ENCODE measurements at regions of chrX and their contacts with region 1.

Region 1: GRCh38 chrX:40647307-40648197 is at the start of gene CXorf38:
- DNase-seq: peak; percentile 90
- H3K4me3 ChIP-seq: peak within 1 kb of the TSS; percentile 78 to 82 (median 81)
- H3K27ac ChIP-seq: peak within 1 kb of the TSS; percentile 64
- H3K4me1 ChIP-seq: peaks cover 21% of the 10 kb centered on the region
- H3K27me3 ChIP-seq: no peaks in the 10 kb centered on the region
- CTCF ChIP-seq: no peak
- POLR2A ChIP-seq: peak; percentile 83
- total RNA-seq, gene CXorf38: 12.1 and 12.4 TPM in 2 replicates

Region 2: GRCh38 chrX:39532761-39533160 is 1114.8 kb before region 1 on chrX:
- CTCF ChIA-PET with region 1: no interaction called
- POLR2A ChIA-PET with region 1: no interaction called
- dilution Hi-C with region 1: no loop called
- intact Hi-C with region 1: no loop called
- DNase-seq: no peak
- H3K4me3 ChIP-seq: no peak overlapping the region
- H3K27ac ChIP-seq: no peak overlapping the region
- H3K4me1 ChIP-seq: no peaks in the 10 kb centered on the region
- H3K27me3 ChIP-seq: peaks cover 0 to 1% of the 10 kb centered on the region in 2 experiments
- CTCF ChIP-seq: no peak
- POLR2A ChIP-seq: no peak

Region 3: DNA sequence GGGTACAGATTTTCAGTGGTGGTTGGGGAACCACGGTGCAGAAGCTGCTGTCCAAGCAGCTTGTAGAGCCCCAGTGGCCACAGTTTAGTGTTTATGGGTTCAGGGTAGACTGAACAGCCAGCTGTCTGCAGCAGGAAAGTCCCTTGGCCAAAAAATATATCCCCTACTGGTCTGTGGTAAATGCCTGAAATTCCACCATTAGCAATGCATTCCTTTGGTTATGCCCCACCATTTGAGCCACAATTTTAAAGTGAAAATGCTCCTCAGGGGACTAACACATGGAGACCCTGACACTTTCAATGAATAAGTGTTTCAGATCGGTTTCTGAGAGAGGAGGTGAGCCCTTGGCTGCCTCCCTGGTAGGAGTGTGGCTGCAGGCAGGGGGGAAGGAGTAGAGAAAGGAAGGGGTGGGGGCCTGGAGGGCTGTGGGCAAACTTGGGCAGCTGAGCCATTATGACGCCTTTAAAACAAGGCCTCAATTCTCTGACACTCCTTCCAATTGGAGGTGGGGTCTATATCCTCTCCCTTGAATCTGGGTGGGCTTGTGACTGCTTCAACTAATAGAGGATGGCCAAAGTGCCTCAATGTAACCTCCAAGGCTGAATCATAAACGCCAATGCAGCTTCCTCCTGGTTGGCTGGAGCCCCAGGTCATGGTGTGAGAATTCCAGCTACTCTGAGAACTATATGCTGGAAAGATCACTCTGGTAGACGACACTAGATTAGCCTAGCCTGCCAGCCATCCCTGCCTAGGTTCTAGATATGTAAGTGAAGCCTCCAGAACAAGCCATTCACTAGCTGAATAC is 142.5 kb before region 1 on chrX:
- CTCF ChIA-PET with region 1: no interaction called
- POLR2A ChIA-PET with region 1: no interaction called
- dilution Hi-C with region 1: no loop called
- intact Hi-C with region 1: no loop called
- DNase-seq: no peak
- H3K4me3 ChIP-seq: no peak overlapping the region
- H3K27ac ChIP-seq: no peak overlapping the region
- H3K4me1 ChIP-seq: no peaks in the 10 kb centered on the region
- H3K27me3 ChIP-seq: no peaks in the 10 kb centered on the region
- CTCF ChIP-seq: no peak
- POLR2A ChIP-seq: no peak

Region 4: GRCh38 chrX:40580537-40581335 is 66.8 kb before region 1 on chrX and contains the start of gene ATP6AP2:
- CTCF ChIA-PET with region 1: no interaction called
- POLR2A ChIA-PET with region 1: no interaction called
- dilution Hi-C with region 1: no loop called
- intact Hi-C with region 1: loop called (anchors 2 kb)
- DNase-seq: peak; percentile 94
- H3K4me3 ChIP-seq: peak within 1 kb of the TSS; percentile 48 to 72 (median 67)
- H3K27ac ChIP-seq: peak within 1 kb of the TSS; percentile 19
- H3K4me1 ChIP-seq: peaks cover 10% of the 10 kb centered on the region
- H3K27me3 ChIP-seq: no peaks in the 10 kb centered on the region
- CTCF ChIP-seq: no peak
- POLR2A ChIP-seq: no peak
- total RNA-seq, gene ATP6AP2: 84.6 and 90.8 TPM in 2 replicates

Region 5: DNA sequence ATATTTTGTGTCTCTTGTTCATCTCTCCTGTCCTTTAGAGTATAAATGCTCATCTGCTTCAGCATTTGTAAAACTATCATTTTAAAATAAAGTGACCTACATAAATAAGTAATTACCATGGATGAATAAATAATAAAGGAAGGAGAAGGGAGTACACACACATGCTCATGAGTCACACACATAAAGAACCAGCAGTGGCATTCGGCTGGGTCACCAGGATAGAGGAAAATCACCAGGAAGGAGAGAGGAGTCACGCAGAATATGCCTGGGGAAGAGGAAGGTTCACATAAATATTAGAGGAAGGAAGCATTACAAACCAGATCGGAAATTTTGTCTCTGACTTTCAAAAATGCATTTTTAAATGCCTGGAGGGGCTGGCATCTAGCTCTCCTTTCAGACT is 126.3 kb after region 1 on chrX:
- CTCF ChIA-PET with region 1: no interaction called
- POLR2A ChIA-PET with region 1: no interaction called
- dilution Hi-C with region 1: no loop called
- intact Hi-C with region 1: no loop called
- DNase-seq: peak; percentile 89
- H3K4me3 ChIP-seq: peak overlapping the region in 1 of 3 experiments; percentile 23
- H3K27ac ChIP-seq: peak overlapping the region; percentile 94
- H3K4me1 ChIP-seq: peaks cover 23% of the 10 kb centered on the region
- H3K27me3 ChIP-seq: no peaks in the 10 kb centered on the region
- CTCF ChIP-seq: no peak
- POLR2A ChIP-seq: no peak

Region 6: GRCh38 chrX:40792433-40792832 is 144.9 kb after region 1 on chrX:
- CTCF ChIA-PET with region 1: interaction called, 68 read pairs
- POLR2A ChIA-PET with region 1: no interaction called
- dilution Hi-C with region 1: no loop called
- intact Hi-C with region 1: loop called (anchors 1 kb)
- DNase-seq: no peak
- H3K4me3 ChIP-seq: no peak overlapping the region
- H3K27ac ChIP-seq: no peak overlapping the region
- H3K4me1 ChIP-seq: peaks cover 6% of the 10 kb centered on the region
- H3K27me3 ChIP-seq: no peaks in the 10 kb centered on the region
- CTCF ChIP-seq: no peak
- POLR2A ChIP-seq: no peak

Region 7: GRCh38 chrX:40864972-40865371 is 217.4 kb after region 1 on chrX:
- CTCF ChIA-PET with region 1: no interaction called
- POLR2A ChIA-PET with region 1: no interaction called
- dilution Hi-C with region 1: no loop called
- intact Hi-C with region 1: no loop called
- DNase-seq: no peak
- H3K4me3 ChIP-seq: no peak overlapping the region
- H3K27ac ChIP-seq: no peak overlapping the region
- H3K4me1 ChIP-seq: peaks cover 11% of the 10 kb centered on the region
- H3K27me3 ChIP-seq: no peaks in the 10 kb centered on the region
- CTCF ChIP-seq: no peak
- POLR2A ChIP-seq: no peak

Region 8: DNA sequence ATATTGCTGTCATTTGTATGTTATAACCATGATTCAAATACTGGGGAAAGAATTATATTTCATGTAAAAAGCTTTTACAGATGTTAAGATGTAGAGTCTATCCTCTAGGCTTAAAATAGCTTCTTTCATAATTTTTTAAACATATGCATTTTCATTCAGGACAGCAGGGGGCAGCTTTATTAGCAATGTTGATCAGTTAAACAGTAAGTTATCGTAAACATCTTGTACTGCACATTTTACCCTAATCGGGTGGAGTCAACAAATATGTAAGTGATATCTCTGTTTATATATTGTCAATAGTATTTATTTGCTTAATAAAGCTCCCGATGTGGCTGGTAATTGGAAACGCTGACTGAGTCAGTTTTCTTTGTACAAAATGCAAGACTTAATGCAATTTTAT is 230.3 kb after region 1 on chrX:
- CTCF ChIA-PET with region 1: interaction called, 11 read pairs
- POLR2A ChIA-PET with region 1: no interaction called
- dilution Hi-C with region 1: no loop called
- intact Hi-C with region 1: no loop called
- DNase-seq: peak; percentile 60
- H3K4me3 ChIP-seq: no peak overlapping the region
- H3K27ac ChIP-seq: no peak overlapping the region
- H3K4me1 ChIP-seq: peaks cover 3% of the 10 kb centered on the region
- H3K27me3 ChIP-seq: no peaks in the 10 kb centered on the region
- CTCF ChIP-seq: peak; percentile 8 to 20
- POLR2A ChIP-seq: no peak

Region 9: GRCh38 chrX:40922307-40922706 is 274.8 kb after region 1 on chrX:
- CTCF ChIA-PET with region 1: interaction called, 7 read pairs
- POLR2A ChIA-PET with region 1: no interaction called
- dilution Hi-C with region 1: no loop called
- intact Hi-C with region 1: loop called (anchors 1 kb)
- DNase-seq: peak; percentile 76
- H3K4me3 ChIP-seq: no peak overlapping the region
- H3K27ac ChIP-seq: no peak overlapping the region
- H3K4me1 ChIP-seq: peaks cover 4% of the 10 kb centered on the region
- H3K27me3 ChIP-seq: no peaks in the 10 kb centered on the region
- CTCF ChIP-seq: peak; percentile 12 to 20
- POLR2A ChIP-seq: no peak

Region 10: GRCh38 chrX:41116948-41117347 is 469.4 kb after region 1 on chrX:
- CTCF ChIA-PET with region 1: interaction called, 28 read pairs
- POLR2A ChIA-PET with region 1: no interaction called
- dilution Hi-C with region 1: no loop called
- intact Hi-C with region 1: loop called (anchors 5 kb)
- DNase-seq: no peak
- H3K4me3 ChIP-seq: no peak overlapping the region
- H3K27ac ChIP-seq: no peak overlapping the region
- H3K4me1 ChIP-seq: peaks cover 4% of the 10 kb centered on the region
- H3K27me3 ChIP-seq: no peaks in the 10 kb centered on the region
- CTCF ChIP-seq: no peak
- POLR2A ChIP-seq: no peak

Region 11: GRCh38 chrX:41180194-41180908 is 532.8 kb after region 1 on chrX:
- CTCF ChIA-PET with region 1: interaction called, 14 read pairs
- POLR2A ChIA-PET with region 1: no interaction called
- dilution Hi-C with region 1: no loop called
- intact Hi-C with region 1: no loop called
- DNase-seq: peak; percentile 66
- H3K4me3 ChIP-seq: no peak overlapping the region
- H3K27ac ChIP-seq: no peak overlapping the region
- H3K4me1 ChIP-seq: peaks cover 3% of the 10 kb centered on the region
- H3K27me3 ChIP-seq: no peaks in the 10 kb centered on the region
- CTCF ChIP-seq: peak; percentile 45 to 52
- POLR2A ChIP-seq: no peak